ENCODE measurements at regions of chr11 and their contacts with region 1.

Region 1: GRCh38 chr11:65083834-65084597 is at the starts of genes CDCA5 and ZFPL1:
- DNase-seq: peak; percentile 91
- ATAC-seq: peak; percentile 85
- H3K4me3 ChIP-seq: peak within 1 kb of the TSS; percentile 86 to 98
- H3K27ac ChIP-seq: peak within 1 kb of the TSS; percentile 82
- H3K4me1 ChIP-seq: peaks cover 7 to 22% of the 10 kb centered on the region in 2 experiments; a peak in 3 of 4 replicates
- H3K27me3 ChIP-seq: no peaks in the 10 kb centered on the region
- CTCF ChIP-seq: no peak
- POLR2A ChIP-seq: peak; percentile 49
- RAD21 ChIP-seq: no peak
- total RNA-seq, gene CDCA5: 72.1 TPM
- total RNA-seq, gene ZFPL1: 35.3 TPM

Region 2: GRCh38 chr11:64314489-64315226 is 769.4 kb before region 1 on chr11:
- CTCF ChIA-PET with region 1: no interaction called
- POLR2A ChIA-PET with region 1: no interaction called
- RAD21 ChIA-PET with region 1: no interaction called
- intact Hi-C with region 1: no loop called
- DNase-seq: no peak
- ATAC-seq: no peak
- H3K4me3 ChIP-seq: no peak overlapping the region
- H3K27ac ChIP-seq: peak overlapping the region; percentile 83; the same call in 1 of the 2 replicates
- H3K4me1 ChIP-seq: peaks cover 11 to 35% of the 10 kb centered on the region in 2 experiments; a peak in 3 of 4 replicates
- H3K27me3 ChIP-seq: no peaks in the 10 kb centered on the region
- CTCF ChIP-seq: peak in 2 of 3 experiments; percentile 44 to 47; a peak in 3 of 6 replicates
- POLR2A ChIP-seq: no peak
- RAD21 ChIP-seq: no peak

Region 3: GRCh38 chr11:65040847-65041621 is 43.0 kb before region 1 on chr11 and contains the start of gene SAC3D1:
- CTCF ChIA-PET with region 1: no interaction called
- POLR2A ChIA-PET with region 1: no interaction called
- RAD21 ChIA-PET with region 1: no interaction called
- intact Hi-C with region 1: loop called (anchors 5 kb)
- DNase-seq: peak; percentile 95
- ATAC-seq: peak; percentile 91
- H3K4me3 ChIP-seq: peak within 1 kb of the TSS; percentile 83 to 92
- H3K27ac ChIP-seq: peak within 1 kb of the TSS; percentile 97
- H3K4me1 ChIP-seq: peaks cover 32 to 38% of the 10 kb centered on the region in 2 experiments
- H3K27me3 ChIP-seq: no peaks in the 10 kb centered on the region
- CTCF ChIP-seq: no peak
- POLR2A ChIP-seq: peak; percentile 12
- RAD21 ChIP-seq: no peak
- total RNA-seq, gene SAC3D1: 36.9 TPM

Region 4: DNA sequence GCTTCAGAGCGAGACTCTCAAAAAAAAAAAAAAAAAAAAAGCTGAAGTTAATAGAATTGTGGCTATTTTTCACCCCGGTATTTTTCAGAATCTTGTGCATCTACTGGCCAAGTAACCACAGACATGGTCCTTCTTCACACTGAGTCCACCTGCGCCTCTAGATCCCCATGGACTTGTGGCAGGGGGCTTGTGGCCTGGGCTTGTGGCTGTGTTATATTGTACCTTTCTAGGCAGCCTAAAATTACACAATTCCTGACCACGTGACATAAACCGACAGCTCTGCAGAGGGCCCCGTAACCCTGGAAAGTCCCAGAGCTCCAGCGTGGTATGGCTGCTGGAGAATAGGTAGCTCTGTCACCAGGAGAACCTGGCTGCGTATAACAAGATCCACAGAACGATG is 14.8 kb before region 1 on chr11:
- CTCF ChIA-PET with region 1: no interaction called
- POLR2A ChIA-PET with region 1: no interaction called
- RAD21 ChIA-PET with region 1: no interaction called
- intact Hi-C with region 1: no loop called
- DNase-seq: no peak
- ATAC-seq: no peak
- H3K4me3 ChIP-seq: no peak overlapping the region
- H3K27ac ChIP-seq: no peak overlapping the region
- H3K4me1 ChIP-seq: no peaks in the 10 kb centered on the region
- H3K27me3 ChIP-seq: no peaks in the 10 kb centered on the region
- CTCF ChIP-seq: no peak
- POLR2A ChIP-seq: no peak
- RAD21 ChIP-seq: no peak